ENCODE measurements at regions of chr1 and their contacts with region 1.

Region 1: GRCh38 chr1:112390775-112391602 is 5.0 kb upstream of the CTTNBP2NL start:
- DNase-seq: peak; percentile 91
- ATAC-seq: peak; percentile 87
- H3K4me3 ChIP-seq: peak overlapping the region; percentile 46 to 73
- H3K27ac ChIP-seq: peak overlapping the region; percentile 89
- H3K4me1 ChIP-seq: peaks cover 14% of the 10 kb centered on the region
- H3K27me3 ChIP-seq: no peaks in the 10 kb centered on the region
- CTCF ChIP-seq: peak; percentile 86

Region 2: DNA sequence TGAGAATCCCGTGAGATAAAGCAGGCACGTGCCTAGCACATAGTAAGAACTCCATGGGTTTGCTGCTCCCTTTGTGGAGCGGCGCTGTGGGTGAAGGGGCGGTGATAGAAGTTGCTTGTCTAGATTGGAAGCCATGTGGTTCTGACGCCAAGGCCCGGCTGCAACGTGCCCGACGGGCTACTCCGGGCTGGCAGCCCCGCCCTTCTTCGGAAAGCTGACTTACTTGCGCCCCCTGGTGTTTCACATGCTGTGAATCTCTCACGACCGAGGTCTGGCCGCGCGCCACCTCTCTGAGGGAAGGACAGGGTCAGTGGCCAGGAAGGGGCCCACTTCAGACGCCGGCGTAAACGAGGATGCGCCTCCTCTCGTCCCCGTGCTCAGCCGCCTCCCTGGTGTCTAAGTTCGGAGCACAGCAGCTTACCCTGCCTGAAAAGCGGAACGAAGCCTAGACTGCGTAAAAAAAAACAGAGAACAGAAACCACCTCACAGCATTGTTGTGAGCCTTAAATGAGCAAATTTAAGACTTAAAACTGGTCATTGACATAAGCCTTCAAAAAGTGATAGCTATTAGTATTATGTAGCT is 75.2 kb after region 1 on chr1:
- CTCF ChIA-PET with region 1: interaction called, 3 read pairs
- POLR2A ChIA-PET with region 1: no interaction called
- in situ Hi-C with region 1: no loop called
- intact Hi-C with region 1: loop called (anchors 1 kb)
- DNase-seq: peak; percentile 64
- ATAC-seq: peak; percentile 94
- H3K4me3 ChIP-seq: peak overlapping the region; percentile 34 to 61
- H3K27ac ChIP-seq: peak overlapping the region; percentile 83
- H3K4me1 ChIP-seq: no peaks in the 10 kb centered on the region; the same call in 1 of the 2 replicates
- H3K27me3 ChIP-seq: no peaks in the 10 kb centered on the region
- CTCF ChIP-seq: peak; percentile 82

Region 3: DNA sequence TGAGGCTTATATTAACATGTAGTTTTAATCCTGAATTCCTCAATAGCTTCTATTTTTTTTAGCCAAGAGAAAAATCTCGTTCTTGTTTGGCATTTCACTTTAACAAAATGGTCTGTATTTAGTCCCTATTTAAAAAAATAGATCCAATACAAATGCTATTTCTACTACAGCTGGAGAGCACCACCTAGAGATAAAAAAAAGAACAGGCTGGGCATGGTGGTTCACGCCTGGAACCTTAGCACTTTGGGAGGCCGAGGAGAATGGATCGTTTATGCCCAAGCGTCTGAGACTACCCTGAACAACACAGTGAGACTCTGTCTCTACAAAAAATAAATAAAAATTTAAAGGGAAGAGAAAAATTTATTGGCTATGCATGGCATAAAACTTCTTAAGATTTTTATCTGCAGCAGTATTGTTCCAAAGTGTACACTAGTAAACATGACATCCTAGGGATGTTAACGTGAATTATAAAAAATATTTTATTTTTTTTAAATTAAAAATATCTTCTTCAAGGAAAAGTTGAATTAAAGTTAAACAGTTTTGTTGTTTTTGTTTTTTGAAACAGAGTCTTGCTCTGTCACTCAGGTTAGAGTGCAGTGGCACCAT is 223.6 kb after region 1 on chr1:
- CTCF ChIA-PET with region 1: no interaction called
- POLR2A ChIA-PET with region 1: no interaction called
- in situ Hi-C with region 1: no loop called
- intact Hi-C with region 1: loop called (anchors 5 kb)
- DNase-seq: no peak
- ATAC-seq: no peak
- H3K4me3 ChIP-seq: no peak overlapping the region
- H3K27ac ChIP-seq: no peak overlapping the region
- H3K4me1 ChIP-seq: 0 out of 2 replicates have a peak, but pooled peaks cover 5% of the 10 kb centered on the region
- H3K27me3 ChIP-seq: no peaks in the 10 kb centered on the region
- CTCF ChIP-seq: peak; percentile 70

Region 4: GRCh38 chr1:112660072-112660471 is 269.1 kb after region 1 on chr1:
- CTCF ChIA-PET with region 1: interaction called, 10 read pairs
- POLR2A ChIA-PET with region 1: no interaction called
- in situ Hi-C with region 1: no loop called
- intact Hi-C with region 1: no loop called
- DNase-seq: no peak
- ATAC-seq: no peak
- H3K4me3 ChIP-seq: no peak overlapping the region
- H3K27ac ChIP-seq: no peak overlapping the region
- H3K4me1 ChIP-seq: no peaks in the 10 kb centered on the region
- H3K27me3 ChIP-seq: no peaks in the 10 kb centered on the region
- CTCF ChIP-seq: no peak

Region 5: GRCh38 chr1:112706908-112707663 is 316.1 kb after region 1 on chr1 and contains the start of gene RHOC:
- CTCF ChIA-PET with region 1: interaction called, 5 read pairs
- POLR2A ChIA-PET with region 1: no interaction called
- in situ Hi-C with region 1: no loop called
- intact Hi-C with region 1: loop called (anchors 2 kb)
- DNase-seq: no peak
- ATAC-seq: peak; percentile 90
- H3K4me3 ChIP-seq: peak within 1 kb of the TSS; percentile 76 to 77
- H3K27ac ChIP-seq: peak within 1 kb of the TSS; percentile 79
- H3K4me1 ChIP-seq: peaks cover 27% of the 10 kb centered on the region
- H3K27me3 ChIP-seq: no peaks in the 10 kb centered on the region
- CTCF ChIP-seq: peak; percentile 92
- total RNA-seq, gene RHOC: 197 TPM